ENCODE measurements at regions of chr19 and their contacts with region 1.

Region 1: DNA sequence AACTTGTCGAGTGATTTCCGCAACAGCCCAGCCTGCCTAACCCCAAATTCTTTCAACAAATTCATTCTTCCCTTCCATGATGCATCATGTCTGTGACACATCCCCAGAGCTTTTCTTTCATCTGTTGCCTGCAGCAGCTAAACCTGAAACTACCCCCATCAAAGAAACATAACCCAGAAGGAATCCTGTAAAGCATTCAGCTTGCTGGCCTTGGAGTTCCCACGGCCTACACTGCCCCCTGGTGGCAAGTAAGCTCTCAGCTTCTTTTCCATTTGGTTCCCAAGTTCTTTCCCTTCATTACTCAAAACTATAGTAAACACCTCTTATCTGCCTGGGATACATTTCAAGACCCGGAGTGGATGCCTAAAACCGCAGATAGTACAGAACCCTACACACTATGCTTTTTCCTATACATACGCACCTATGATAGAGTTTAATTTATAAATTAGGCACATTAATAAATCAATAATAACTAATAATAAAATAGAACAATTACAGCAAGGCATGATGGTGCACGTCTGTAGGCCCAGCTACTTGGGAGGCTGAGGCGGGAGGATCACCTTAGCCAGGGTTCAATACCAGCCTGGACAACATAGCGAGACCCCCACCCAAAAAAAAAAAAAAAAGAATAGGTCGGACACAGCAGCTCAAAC is 7.4 kb downstream of the ETHE1 start:
- DNase-seq: peak; percentile 89
- H3K4me3 ChIP-seq: no peak overlapping the region
- H3K27ac ChIP-seq: no peak overlapping the region
- H3K4me1 ChIP-seq: no peaks in the 10 kb centered on the region
- H3K27me3 ChIP-seq: no peaks in the 10 kb centered on the region
- CTCF ChIP-seq: peak; percentile 94

Region 2: DNA sequence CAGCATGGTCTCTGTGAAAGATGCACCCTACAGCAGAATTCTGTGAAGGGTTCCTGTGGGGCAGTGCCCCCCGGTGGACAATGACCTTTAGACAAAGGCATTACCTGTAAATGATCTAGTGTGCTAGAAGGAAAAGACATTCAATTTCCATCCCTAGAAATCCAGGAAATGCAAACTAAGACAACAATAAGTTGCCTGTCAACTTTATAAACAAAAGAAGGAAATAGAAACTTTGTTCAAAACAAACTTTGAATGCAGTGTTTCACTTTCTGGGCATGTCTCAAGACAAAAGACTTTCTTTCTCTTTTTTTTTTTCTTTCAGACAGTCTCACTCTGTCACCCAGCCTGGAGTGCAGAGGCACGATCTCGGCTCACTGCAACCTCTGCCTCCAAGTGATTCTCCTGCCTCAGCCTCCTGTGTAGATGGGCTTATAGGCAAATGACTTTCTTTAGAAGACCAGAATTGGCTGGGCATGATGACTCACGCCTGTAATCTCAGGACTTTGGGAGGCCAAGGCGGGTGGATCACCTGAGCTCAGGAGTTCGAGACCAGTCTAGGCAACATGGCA is 89.3 kb before region 1 on chr19:
- CTCF ChIA-PET with region 1: interaction called, 25 read pairs
- POLR2A ChIA-PET with region 1: interaction called, 3 read pairs
- intact Hi-C with region 1: loop called (anchors 5 kb)
- DNase-seq: no peak
- H3K4me3 ChIP-seq: no peak overlapping the region
- H3K27ac ChIP-seq: no peak overlapping the region
- H3K4me1 ChIP-seq: peaks cover 6% of the 10 kb centered on the region
- H3K27me3 ChIP-seq: no peaks in the 10 kb centered on the region
- CTCF ChIP-seq: 0 out of 2 replicates have a peak, but pooled peaks have one; percentile 15

Region 3: DNA sequence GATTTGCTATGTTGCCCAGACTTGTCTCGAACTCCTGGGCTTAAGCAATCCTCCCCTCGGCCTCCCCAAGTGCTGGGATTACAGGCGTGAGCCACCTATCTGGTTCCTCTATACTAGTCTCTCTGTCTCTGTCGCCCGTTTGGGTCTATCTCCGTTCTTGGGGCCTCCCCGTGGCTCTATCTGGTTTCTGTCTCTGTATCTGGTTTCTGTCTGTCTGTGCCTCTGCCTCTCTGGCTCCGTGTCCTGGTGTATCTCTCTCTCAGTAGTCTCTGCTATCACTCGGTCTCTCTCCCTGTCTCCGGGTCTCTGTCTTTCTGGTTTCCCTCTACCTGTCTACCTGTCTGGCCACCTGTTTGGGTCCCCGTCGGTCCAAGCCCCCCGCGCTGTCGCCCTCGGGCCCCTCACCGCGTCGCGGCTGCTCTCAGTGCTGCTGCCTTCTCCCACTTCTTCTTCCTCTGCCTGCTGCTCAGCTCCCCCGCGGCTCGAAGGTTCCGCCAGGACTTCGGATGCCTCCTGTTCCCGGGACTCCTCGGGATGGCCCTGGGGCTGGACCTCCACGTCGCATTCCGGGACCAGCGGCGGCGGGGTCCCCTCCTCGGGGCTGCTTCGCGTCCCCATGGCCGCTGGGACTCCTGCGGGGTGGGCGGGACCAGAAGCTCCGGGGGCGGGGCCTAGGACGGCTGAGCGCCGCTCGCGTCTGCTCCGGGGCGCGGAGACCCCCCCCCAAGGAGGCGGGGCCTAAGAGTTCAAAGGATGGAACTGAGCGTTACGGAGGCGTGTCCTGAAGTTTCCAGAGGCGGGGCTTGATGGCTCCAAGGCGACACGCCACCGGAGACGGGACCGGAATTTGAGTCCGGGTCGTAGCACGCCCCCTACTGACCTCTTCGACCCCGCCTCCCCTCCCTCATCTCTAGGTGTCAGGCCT is 15.8 kb before region 1 on chr19:
- CTCF ChIA-PET with region 1: interaction called, 10 read pairs
- POLR2A ChIA-PET with region 1: no interaction called
- intact Hi-C with region 1: no loop called
- DNase-seq: peak; percentile 97
- H3K4me3 ChIP-seq: peak overlapping the region; percentile 83
- H3K27ac ChIP-seq: peak overlapping the region; percentile 73
- H3K4me1 ChIP-seq: peaks cover 5% of the 10 kb centered on the region
- H3K27me3 ChIP-seq: no peaks in the 10 kb centered on the region
- CTCF ChIP-seq: peak; percentile 44

Measured in A673 (cell line).